ENCODE measurements at regions of chr16 and their contacts with region 1.

Region 1: GRCh38 chr16:3611146-3611975 is at the start of gene SLX4:
- DNase-seq: peak; percentile 38 to 95
- H3K4me3 ChIP-seq: peak within 1 kb of the TSS; percentile 61 to 76
- H3K27ac ChIP-seq: peak within 1 kb of the TSS; percentile 60 to 66
- H3K4me1 ChIP-seq: peaks cover 0 to 11% of the 10 kb centered on the region in 2 donors
- H3K27me3 ChIP-seq: no peaks in the 10 kb centered on the region
- CTCF ChIP-seq: peak in 1 of 3 experiments; percentile 0
- total RNA-seq, gene SLX4: 3.4 TPM

Region 2: GRCh38 chr16:3520413-3520812 is 90.9 kb before region 1 on chr16:
- intact Hi-C with region 1: no loop called
- DNase-seq: no peak
- H3K4me3 ChIP-seq: peak overlapping the region in 1 of 2 donors; percentile 37
- H3K27ac ChIP-seq: peak overlapping the region; percentile 70 to 83
- H3K4me1 ChIP-seq: peaks cover 0 to 5% of the 10 kb centered on the region in 2 donors
- H3K27me3 ChIP-seq: no peaks in the 10 kb centered on the region
- CTCF ChIP-seq: no peak

Region 3: DNA sequence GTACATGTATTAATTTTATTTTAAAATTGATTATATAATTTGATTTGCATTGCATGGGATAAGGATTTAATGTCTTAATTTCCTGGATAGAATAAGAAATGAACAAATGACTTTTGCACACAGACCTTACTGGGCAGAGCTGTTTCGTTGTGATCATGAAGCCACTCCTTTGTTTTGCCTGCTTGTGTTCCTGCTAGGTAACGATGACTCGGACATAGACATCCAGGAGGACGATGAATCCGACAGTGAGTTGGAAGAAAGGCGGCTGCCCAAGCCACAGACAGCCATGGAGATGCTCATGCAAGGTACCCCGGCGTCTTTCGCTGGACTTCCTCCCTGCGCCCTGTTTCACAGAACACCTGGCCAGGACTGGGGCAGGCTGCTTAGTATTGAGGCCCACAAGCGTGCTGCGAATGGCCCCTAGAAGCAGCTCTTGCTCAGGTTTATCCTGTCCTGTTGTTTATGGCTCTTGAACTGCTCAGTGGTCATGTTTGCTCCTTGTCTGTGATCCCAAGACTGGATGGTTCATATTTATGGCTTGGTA is 80.9 kb before region 1 on chr16:
- intact Hi-C with region 1: loop called (anchors 1 kb)
- DNase-seq: no peak
- H3K4me3 ChIP-seq: no peak overlapping the region
- H3K27ac ChIP-seq: no peak overlapping the region
- H3K4me1 ChIP-seq: peaks cover 0 to 2% of the 10 kb centered on the region in 2 donors
- H3K27me3 ChIP-seq: no peaks in the 10 kb centered on the region
- CTCF ChIP-seq: no peak

Region 4: DNA sequence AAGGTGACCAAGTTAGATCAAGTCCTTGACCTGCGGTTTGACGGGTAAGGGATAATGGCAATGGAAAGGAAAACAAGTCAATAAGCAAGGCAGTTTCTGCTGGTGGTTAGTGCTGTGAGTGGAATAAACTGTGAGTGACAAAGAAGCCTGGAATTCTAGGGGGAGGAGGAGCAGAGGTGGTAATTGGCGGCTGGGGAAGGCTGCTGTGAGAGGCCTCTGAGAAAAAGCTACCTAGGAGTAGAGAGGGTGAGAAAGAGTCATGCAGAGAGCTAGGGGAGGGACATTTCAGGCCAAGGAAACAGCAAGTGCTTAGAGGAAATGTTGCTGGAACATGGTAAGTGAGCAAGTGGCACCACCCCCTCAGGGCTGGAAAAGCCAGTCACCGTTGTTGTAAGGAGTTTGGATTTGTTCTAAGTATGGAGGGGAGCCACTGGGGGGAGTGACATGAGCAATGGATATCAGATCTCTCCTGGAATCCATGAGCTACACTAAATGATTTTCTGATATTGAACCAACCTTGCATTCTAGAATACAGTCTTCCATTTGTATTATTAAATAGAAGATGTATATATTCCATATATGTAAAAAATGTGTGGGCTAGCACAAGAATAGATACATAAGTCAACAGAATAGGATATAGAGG is 40.8 kb before region 1 on chr16:
- intact Hi-C with region 1: no loop called
- DNase-seq: no peak
- H3K4me3 ChIP-seq: no peak overlapping the region
- H3K27ac ChIP-seq: no peak overlapping the region
- H3K4me1 ChIP-seq: no peaks in the 10 kb centered on the region
- H3K27me3 ChIP-seq: no peaks in the 10 kb centered on the region
- CTCF ChIP-seq: no peak

Region 5: GRCh38 chr16:3706253-3706999 is 95.1 kb after region 1 on chr16:
- intact Hi-C with region 1: no loop called
- DNase-seq: no peak
- H3K4me3 ChIP-seq: no peak overlapping the region
- H3K27ac ChIP-seq: no peak overlapping the region
- H3K4me1 ChIP-seq: no peaks in the 10 kb centered on the region
- H3K27me3 ChIP-seq: no peaks in the 10 kb centered on the region
- CTCF ChIP-seq: no peak

Region 6: GRCh38 chr16:4077083-4077714 is 465.8 kb after region 1 on chr16:
- intact Hi-C with region 1: no loop called
- DNase-seq: peak in 1 of 2 donors; percentile 19
- H3K4me3 ChIP-seq: no peak overlapping the region
- H3K27ac ChIP-seq: peak overlapping the region in 1 of 2 donors; percentile 46
- H3K4me1 ChIP-seq: peaks cover 0 to 11% of the 10 kb centered on the region in 2 donors
- H3K27me3 ChIP-seq: no peaks in the 10 kb centered on the region
- CTCF ChIP-seq: no peak

Region 7: GRCh38 chr16:4416200-4417032 is 805.1 kb after region 1 on chr16 and contains the start of gene CORO7:
- intact Hi-C with region 1: loop called (anchors 10 kb)
- DNase-seq: peak; percentile 87 to 98
- H3K4me3 ChIP-seq: peak within 1 kb of the TSS; percentile 65 to 83
- H3K27ac ChIP-seq: peak within 1 kb of the TSS; percentile 49 to 67
- H3K4me1 ChIP-seq: peaks cover 0 to 9% of the 10 kb centered on the region in 2 donors
- H3K27me3 ChIP-seq: no peaks in the 10 kb centered on the region
- CTCF ChIP-seq: peak in 1 of 3 experiments; percentile 3
- total RNA-seq, gene CORO7: 41.9 TPM

Measured in ascending aorta (tissue), 2 donors.